ENCODE measurements at regions of chr6 and their contacts with region 1.

Region 1: DNA sequence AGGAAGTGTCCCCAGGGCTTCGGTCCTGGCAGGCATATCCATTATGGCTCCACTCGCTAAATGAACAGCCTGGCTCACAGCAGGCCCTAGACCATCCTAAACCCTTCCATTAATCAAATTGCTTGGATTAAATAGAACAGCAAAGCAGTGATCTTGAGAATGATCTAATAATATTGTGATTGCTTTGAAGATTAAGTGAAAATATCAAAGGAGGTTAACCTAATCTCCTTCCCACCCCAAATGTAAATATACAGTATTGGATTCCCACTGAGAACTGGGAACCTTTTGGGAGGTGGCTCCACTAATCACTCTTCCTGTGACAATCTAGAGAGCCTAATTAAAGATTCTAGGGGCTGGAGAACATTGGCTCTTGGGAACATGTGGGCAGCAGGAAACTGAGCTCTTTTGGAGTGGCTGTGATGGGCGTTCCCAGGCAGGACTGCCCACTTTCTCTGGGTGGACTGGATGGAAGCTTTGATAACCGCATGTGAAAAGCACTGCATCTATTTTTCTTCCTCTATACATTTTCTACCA is 68.3 kb upstream of the FRMD1 start:
- DNase-seq: no peak
- H3K4me3 ChIP-seq: no peak overlapping the region
- H3K27ac ChIP-seq: no peak overlapping the region
- H3K4me1 ChIP-seq: peaks cover 0 to 13% (median 3%) of the 10 kb centered on the region in 4 donors
- H3K27me3 ChIP-seq: no peaks in the 10 kb centered on the region
- CTCF ChIP-seq: no peak
- EP300 ChIP-seq: no peak
- POLR2A ChIP-seq: no peak

Region 2: GRCh38 chr6:168107212-168107983 is 39.9 kb before region 1 on chr6:
- in situ Hi-C with region 1: no loop called
- intact Hi-C with region 1: no loop called
- DNase-seq: no peak
- H3K4me3 ChIP-seq: no peak overlapping the region
- H3K27ac ChIP-seq: no peak overlapping the region
- H3K4me1 ChIP-seq: peaks cover 0 to 4% (median 0%) of the 10 kb centered on the region in 4 donors
- H3K27me3 ChIP-seq: peaks cover 3% of the 10 kb centered on the region
- CTCF ChIP-seq: no peak
- EP300 ChIP-seq: no peak
- POLR2A ChIP-seq: no peak

Region 3: DNA sequence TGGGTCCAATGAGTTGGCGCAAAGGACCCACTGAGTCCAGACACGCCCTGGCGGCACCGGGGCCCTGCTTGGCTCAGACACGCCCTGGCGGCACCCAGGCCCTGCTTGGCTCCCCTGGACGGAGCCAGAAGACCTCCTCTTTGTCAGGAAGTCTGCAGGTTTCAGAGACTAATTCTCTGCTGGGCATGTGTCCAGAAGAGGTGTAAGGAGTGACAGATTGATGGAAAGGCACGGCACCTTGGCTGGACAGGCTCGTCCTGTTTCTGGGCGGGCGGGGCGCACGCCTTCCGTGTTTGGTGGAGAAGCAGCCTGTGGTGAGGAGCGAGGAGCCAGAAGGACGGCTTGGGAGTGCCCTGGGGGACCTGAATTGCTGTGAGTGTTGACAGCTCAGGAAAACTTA is 195.4 kb after region 1 on chr6:
- in situ Hi-C with region 1: no loop called
- intact Hi-C with region 1: loop called (anchors 10 kb)
- DNase-seq: peak; percentile 84
- H3K4me3 ChIP-seq: no peak overlapping the region
- H3K27ac ChIP-seq: peak overlapping the region in 1 of 4 donors; percentile 29
- H3K4me1 ChIP-seq: peaks cover 0 to 4% (median 2%) of the 10 kb centered on the region in 4 donors
- H3K27me3 ChIP-seq: peaks cover 5% of the 10 kb centered on the region
- CTCF ChIP-seq: no peak
- EP300 ChIP-seq: no peak
- POLR2A ChIP-seq: no peak

Region 4: GRCh38 chr6:168355716-168356449 is 208.6 kb after region 1 on chr6:
- in situ Hi-C with region 1: loop called in 3 of 4 experiments (anchors 10 kb)
- intact Hi-C with region 1: no loop called
- DNase-seq: peak; percentile 68
- H3K4me3 ChIP-seq: peak overlapping the region in 1 of 4 donors; percentile 15
- H3K27ac ChIP-seq: no peak overlapping the region
- H3K4me1 ChIP-seq: peaks cover 0 to 8% (median 0%) of the 10 kb centered on the region in 4 donors
- H3K27me3 ChIP-seq: no peaks in the 10 kb centered on the region
- CTCF ChIP-seq: peak; percentile 65 to 91 (median 79)
- EP300 ChIP-seq: no peak
- POLR2A ChIP-seq: no peak